Activated naive CD4-positive, alpha-beta T cell treated with anti-CD3 and anti-CD28 coated beads for 36 hours (primary cell): ENCODE measurements at regions of chr12 and their contacts with region 1.

Region 1: GRCh38 chr12:9707864-9708808 is 24.8 kb downstream of the CLECL1 start:
- DNase-seq: peak; percentile 86
- H3K4me3 Mint-ChIP-seq: peak overlapping the region; percentile 70
- H3K27ac Mint-ChIP-seq: peak overlapping the region; percentile 92
- H3K4me1 Mint-ChIP-seq: peaks cover 50% of the 10 kb centered on the region
- H3K27me3 Mint-ChIP-seq: no peaks in the 10 kb centered on the region

Region 2: DNA sequence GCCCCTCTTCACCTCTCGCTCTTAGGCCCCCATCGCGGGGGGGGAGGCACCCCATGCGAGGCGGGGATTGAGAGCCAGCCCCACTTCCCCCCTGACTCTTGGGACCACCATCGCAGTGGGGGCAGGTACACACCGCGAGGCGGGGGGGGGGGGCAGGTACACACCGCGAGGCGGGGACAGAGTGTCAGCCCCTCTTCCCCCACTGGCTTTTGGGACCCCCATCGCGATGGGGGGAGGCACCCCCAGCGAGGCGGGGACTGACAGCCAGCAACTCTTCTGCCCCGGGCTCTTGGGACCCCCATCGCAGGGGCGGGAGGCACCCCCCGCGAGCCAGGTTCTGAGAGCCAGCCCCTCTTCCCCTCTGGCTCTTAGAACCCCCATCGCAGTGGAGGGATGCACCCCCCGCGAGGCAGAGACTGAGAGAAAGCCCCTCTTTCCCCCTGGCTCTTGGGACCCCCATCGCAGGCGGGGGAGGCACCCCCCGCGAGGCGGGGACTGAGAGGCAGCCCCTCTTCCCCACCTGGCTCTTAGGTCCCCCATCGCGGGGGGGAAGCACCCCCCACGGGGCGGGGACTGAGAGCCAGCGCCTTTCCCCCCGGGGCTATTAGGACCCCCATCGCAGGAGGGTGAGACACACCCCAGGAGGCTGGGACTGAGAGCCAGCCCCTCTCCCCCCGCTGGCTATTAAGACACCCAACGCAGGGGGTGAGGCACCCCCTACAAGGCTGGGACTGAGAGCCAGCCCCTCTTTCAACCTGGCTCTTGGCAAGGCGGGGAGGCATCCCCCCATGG is 303.5 kb before region 1 on chr12:
- CTCF ChIA-PET with region 1: no interaction called
- intact Hi-C with region 1: no loop called
- DNase-seq: no peak
- H3K4me3 Mint-ChIP-seq: no peak overlapping the region
- H3K27ac Mint-ChIP-seq: no peak overlapping the region
- H3K4me1 Mint-ChIP-seq: no peaks in the 10 kb centered on the region
- H3K27me3 Mint-ChIP-seq: no peaks in the 10 kb centered on the region

Region 3: GRCh38 chr12:9449181-9449580 is 259.0 kb before region 1 on chr12:
- CTCF ChIA-PET with region 1: interaction called, 9 read pairs
- intact Hi-C with region 1: loop called (anchors 5 kb)
- DNase-seq: no peak
- H3K4me3 Mint-ChIP-seq: peak overlapping the region; percentile 93
- H3K27ac Mint-ChIP-seq: no peak overlapping the region
- H3K4me1 Mint-ChIP-seq: peaks cover 16% of the 10 kb centered on the region
- H3K27me3 Mint-ChIP-seq: no peaks in the 10 kb centered on the region

Region 4: DNA sequence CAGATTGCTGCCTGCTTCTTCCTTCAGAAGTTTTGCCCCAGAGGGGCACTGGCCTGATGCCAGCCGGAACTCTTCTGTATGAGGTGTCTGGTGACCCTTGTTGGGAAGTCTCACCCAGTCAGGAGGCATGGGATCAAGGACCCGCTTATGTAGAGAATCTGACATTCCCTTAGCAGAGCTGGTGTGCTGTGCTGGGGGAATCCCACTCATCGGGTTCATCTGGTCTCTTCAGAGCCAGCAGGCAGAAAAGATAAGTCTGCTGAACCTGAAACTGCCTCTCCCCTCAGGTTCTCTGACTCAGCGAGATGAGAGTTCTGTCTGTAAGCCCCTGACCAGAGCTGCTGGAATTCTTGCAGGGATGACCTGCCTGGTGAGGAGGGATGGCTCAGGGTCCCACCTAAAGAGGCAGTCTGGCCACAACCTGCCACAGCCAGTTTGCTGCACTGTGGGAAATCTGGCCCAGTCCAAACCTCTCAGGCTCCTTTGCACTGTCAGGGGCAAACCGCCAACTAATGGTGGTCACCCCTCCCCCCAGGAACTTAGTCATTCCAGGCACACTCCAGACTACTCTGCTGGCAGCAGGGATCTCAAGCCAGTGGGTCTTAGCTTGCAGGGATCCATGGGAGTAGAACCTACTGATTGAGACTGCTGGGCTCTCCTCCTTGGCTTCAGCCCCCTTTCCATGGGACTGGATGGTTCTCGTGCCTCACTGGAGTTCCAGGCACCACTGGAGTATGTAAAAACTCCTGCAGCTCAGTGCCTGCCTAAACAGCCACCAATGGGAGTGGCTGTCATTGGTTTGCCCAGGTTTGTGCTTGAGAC is 34.5 kb before region 1 on chr12:
- CTCF ChIA-PET with region 1: interaction called, 6 read pairs
- intact Hi-C with region 1: loop called (anchors 1 kb)
- DNase-seq: peak; percentile 84
- H3K4me3 Mint-ChIP-seq: peak overlapping the region; percentile 90
- H3K27ac Mint-ChIP-seq: peak overlapping the region; percentile 97
- H3K4me1 Mint-ChIP-seq: peaks cover 35% of the 10 kb centered on the region
- H3K27me3 Mint-ChIP-seq: no peaks in the 10 kb centered on the region

Region 5: GRCh38 chr12:9721394-9722092 is 13.4 kb after region 1 on chr12:
- CTCF ChIA-PET with region 1: interaction called, 13 read pairs
- intact Hi-C with region 1: no loop called
- DNase-seq: no peak
- H3K4me3 Mint-ChIP-seq: no peak overlapping the region
- H3K27ac Mint-ChIP-seq: no peak overlapping the region
- H3K4me1 Mint-ChIP-seq: peaks cover 29% of the 10 kb centered on the region
- H3K27me3 Mint-ChIP-seq: peaks cover 4% of the 10 kb centered on the region